ENCODE measurements at regions of chr16 and their contacts with region 1.

Region 1: DNA sequence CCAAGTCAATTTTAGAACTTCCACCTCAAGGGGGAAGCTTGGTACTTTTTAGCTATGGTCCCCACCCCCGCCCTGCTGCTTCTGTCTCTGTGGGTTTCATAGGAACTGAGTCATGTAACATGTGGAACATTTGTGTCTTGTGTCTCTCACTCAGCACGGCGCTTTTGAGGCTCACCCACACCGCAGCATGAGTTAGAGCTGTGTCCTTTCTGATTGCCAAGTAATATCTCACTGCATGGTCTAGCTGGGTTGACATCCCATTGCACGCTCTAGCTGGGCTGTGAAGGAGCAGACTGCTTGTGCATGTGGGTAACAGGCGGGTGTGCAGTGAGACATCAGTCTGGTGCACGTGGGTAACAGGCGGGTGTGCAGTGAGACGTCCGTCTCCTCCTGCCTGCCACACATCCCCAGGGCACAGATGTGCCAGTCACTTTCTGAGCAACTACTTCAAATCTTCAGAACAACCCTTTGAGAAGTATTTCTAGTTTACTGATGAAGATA is 26.4 kb upstream of the SLC7A5 start:
- DNase-seq: peak; percentile 93
- H3K4me3 Mint-ChIP-seq: peak overlapping the region; percentile 54
- H3K27ac Mint-ChIP-seq: peak overlapping the region; percentile 100
- H3K4me1 Mint-ChIP-seq: peaks cover 56% of the 10 kb centered on the region
- H3K27me3 Mint-ChIP-seq: no peaks in the 10 kb centered on the region

Region 2: GRCh38 chr16:87853411-87854052 is 42.2 kb before region 1 on chr16:
- CTCF ChIA-PET with region 1: interaction called, 10 read pairs
- POLR2A ChIA-PET with region 1: interaction called, 11 read pairs
- DNase-seq: peak; percentile 95
- H3K4me3 Mint-ChIP-seq: peak overlapping the region; percentile 66
- H3K27ac Mint-ChIP-seq: peak overlapping the region; percentile 90
- H3K4me1 Mint-ChIP-seq: peaks cover 67% of the 10 kb centered on the region
- H3K27me3 Mint-ChIP-seq: no peaks in the 10 kb centered on the region

Region 3: GRCh38 chr16:87860553-87861299 is 35.0 kb before region 1 on chr16:
- CTCF ChIA-PET with region 1: interaction called, 4 read pairs
- POLR2A ChIA-PET with region 1: interaction called, 82 read pairs
- DNase-seq: no peak
- H3K4me3 Mint-ChIP-seq: peak overlapping the region; percentile 56
- H3K27ac Mint-ChIP-seq: peak overlapping the region; percentile 83
- H3K4me1 Mint-ChIP-seq: peaks cover 87% of the 10 kb centered on the region
- H3K27me3 Mint-ChIP-seq: no peaks in the 10 kb centered on the region

Region 4: GRCh38 chr16:87877938-87878507 is 17.7 kb before region 1 on chr16:
- CTCF ChIA-PET with region 1: interaction called, 57 read pairs
- POLR2A ChIA-PET with region 1: interaction called, 82 read pairs
- DNase-seq: peak; percentile 57
- H3K4me3 Mint-ChIP-seq: no peak overlapping the region
- H3K27ac Mint-ChIP-seq: no peak overlapping the region
- H3K4me1 Mint-ChIP-seq: peaks cover 30% of the 10 kb centered on the region
- H3K27me3 Mint-ChIP-seq: peaks cover 22% of the 10 kb centered on the region

Region 5: DNA sequence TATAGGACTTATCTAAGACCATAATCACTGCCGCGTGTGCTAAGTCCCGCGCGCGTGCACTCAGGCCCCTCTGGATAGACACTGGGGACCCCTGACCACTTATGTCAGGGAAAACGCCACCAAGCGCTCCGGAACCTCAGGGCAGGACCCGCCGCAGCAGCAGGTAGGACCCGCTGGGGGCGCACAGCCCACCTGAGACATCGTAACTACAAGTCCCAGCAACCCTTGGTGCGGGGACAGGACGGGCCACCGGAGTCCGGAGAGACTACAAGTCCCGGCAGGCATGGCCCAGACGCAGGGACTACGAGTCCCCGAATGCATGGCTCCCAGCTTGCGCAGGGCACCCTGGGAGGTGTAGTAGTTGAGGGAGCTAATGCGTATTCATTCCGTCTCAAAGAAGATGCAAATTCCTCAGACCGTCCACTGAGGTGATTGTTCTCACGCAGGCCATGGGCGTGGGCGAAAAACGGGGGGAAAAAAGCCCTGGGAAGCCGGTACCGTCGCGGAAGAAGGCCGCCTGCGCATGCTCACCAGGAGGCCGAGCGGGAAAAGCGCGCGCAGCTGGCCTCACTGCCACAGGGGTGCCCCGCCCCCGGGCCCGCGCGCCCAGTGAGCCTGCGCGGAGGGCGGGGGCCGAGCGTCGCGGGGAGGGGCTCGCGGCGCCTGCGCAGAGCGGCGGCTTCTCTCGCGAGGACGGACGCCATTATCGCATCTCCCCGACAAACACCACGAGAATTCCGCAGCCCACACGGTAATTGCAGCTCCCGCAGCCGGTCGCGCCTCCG is 55.3 kb after region 1 on chr16 and contains the start of gene BANP:
- CTCF ChIA-PET with region 1: interaction called, 4 read pairs
- POLR2A ChIA-PET with region 1: interaction called, 21 read pairs
- DNase-seq: peak; percentile 97
- H3K4me3 Mint-ChIP-seq: peak within 1 kb of the TSS; percentile 98
- H3K27ac Mint-ChIP-seq: peak within 1 kb of the TSS; percentile 99
- H3K4me1 Mint-ChIP-seq: peaks cover 66% of the 10 kb centered on the region
- H3K27me3 Mint-ChIP-seq: no peaks in the 10 kb centered on the region
- total RNA-seq, gene BANP: 33.6 to 38.9 TPM

Measured in activated CD4-positive, alpha-beta memory T cell treated with anti-CD3 and anti-CD28 coated beads, Interleukin-2, amount 10 ng/mL, durations not matched to agents 7 days and 5 days (primary cell).